Transverse colon (tissue), 4 donors: ENCODE measurements at regions of chr11 and their contacts with region 1.

Region 1: DNA sequence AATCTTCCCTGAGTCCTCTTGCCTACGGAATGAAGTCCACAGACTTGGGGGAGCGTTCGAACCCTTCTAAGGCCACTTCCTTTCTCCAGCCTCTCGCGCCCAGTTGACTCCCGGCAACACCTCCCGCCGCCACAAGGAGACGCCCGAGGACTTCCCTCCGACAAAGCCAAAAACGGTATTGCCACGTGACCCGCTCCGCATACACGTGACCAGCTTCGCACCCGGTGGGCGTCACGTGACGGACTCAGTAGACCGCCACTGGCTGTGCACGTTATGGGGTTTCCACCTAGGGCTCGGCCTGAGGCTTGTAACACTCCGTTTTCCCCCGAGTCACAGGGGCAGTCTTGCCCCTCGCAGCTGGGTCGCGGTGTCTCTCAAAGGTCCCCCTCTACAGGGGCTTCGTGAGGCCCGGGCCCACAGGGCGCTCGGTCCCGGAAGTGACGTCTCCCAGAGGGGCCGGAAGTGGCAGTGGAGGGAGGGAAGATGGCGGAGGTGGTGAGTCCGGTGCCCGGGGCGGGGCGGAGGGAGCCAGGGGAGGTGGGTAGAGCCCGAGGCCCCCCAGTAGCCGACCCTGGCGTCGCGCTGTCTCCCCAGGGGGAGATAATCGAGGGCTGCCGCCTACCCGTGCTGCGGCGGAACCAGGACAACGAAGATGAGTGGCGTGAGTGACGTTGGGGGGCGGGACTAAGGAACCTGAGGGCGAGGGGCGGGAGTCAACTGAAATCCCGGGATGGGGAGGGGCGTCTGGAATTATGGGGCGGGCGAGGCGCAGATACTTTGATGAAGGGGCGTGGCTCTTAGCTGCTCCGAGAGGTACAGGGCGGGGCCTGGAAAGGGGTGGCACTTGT is at the start of gene KAT5:
- DNase-seq: peak; percentile 100
- H3K4me3 ChIP-seq: peak within 1 kb of the TSS; percentile 59 to 84 (median 67)
- H3K27ac ChIP-seq: peak within 1 kb of the TSS; percentile 91 to 99 (median 93)
- H3K4me1 ChIP-seq: peaks cover 9 to 26% (median 15%) of the 10 kb centered on the region in 4 donors
- H3K27me3 ChIP-seq: no peaks in the 10 kb centered on the region
- CTCF ChIP-seq: peak; percentile 96 to 100 (median 99)
- EP300 ChIP-seq: peak; percentile 28
- POLR2A ChIP-seq: peak; percentile 92
- total RNA-seq, gene KAT5: 51.6 to 203 (median 74.1) TPM

Region 2: DNA sequence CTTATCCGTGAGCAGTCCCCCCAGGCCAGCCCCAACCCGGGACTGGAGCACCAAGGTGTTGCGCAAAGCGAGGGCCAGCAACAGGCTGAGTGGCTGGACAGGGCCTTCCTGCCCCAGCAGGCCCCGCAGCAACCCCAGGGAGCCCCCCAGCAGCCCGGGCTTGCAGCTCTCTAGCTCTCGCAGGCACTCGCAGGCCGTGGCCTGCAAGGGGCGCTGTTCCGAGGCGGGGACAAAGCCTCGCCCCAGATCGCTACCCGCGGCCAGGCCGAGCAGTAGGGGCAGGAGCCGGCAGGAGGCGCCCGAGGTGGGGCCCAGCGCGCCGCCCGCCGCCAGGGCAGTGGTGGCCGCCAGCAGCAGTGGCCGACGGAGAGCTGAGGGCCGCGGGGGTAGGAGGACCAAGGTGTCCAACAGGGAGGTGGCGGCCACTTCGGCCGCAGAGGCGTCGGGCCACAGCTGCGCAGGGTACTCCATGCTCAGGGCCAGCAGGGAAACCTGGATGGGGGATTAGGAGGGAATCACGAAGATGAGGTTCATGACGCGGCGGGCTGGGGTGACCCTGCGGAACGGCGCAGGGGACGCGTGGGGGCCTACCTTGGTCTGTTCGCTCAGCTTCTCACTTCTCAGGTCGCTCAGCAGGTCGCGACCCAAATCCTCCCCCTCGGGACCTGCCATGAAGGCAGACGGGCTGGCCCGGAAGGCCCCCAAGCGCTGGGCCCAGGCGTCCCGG is 68.0 kb after region 1 on chr11:
- in situ Hi-C with region 1: loop called in 1 of 4 experiments (anchors 10 kb)
- intact Hi-C with region 1: loop called (anchors 5 kb)
- DNase-seq: peak; percentile 90
- H3K4me3 ChIP-seq: peak overlapping the region; percentile 58 to 97 (median 85)
- H3K27ac ChIP-seq: peak overlapping the region; percentile 86 to 96 (median 90)
- H3K4me1 ChIP-seq: peaks cover 14 to 21% (median 19%) of the 10 kb centered on the region in 4 donors
- H3K27me3 ChIP-seq: no peaks in the 10 kb centered on the region
- CTCF ChIP-seq: peak; percentile 97 to 100 (median 99)
- EP300 ChIP-seq: no peak
- POLR2A ChIP-seq: peak; percentile 64